Activated naive CD4-positive, alpha-beta T cell treated with anti-CD3 and anti-CD28 coated beads, Interleukin-2, amount 10 ng/mL, durations not matched to agents 7 days and 5 days (primary cell): ENCODE measurements at regions of chr19 and their contacts with region 1.

Region 1: DNA sequence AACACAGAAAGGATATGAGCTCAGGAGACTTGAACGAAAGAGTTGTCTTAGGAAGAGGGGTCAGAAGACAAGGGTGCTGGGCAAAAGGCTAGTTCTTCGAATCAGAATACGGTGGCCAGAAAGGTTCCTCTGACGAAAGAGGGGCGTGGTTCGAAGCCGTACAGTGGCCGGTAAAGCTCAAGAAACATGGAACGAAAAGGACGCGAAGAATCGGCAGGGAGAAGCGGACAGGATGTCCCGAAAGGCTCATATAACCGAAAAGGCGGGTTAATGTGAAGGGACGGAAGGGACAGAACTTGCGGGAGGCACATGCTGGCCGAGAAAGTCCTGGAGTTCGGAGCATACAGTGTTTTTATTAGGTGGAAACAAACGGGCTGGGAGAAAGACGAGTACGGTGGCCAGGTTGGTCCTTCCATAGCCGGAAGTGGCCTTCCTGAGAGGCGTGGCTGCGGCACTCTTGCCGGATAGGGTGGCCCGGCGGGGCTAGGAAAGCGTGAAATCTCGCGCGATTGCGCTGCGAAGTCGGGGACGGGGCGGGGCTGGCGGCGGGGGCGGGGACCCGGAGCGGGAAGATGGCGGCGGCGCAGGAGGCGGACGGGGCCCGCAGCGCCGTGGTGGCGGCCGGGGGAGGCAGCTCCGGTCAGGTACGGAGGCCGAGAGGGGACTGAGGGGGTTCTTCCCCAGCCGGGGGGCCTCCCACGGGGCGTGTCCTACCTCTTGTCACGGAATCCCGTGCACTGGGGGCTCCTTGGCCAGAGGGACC is at the start of gene CLPTM1:
- DNase-seq: peak; percentile 97
- H3K4me3 Mint-ChIP-seq: peak within 1 kb of the TSS; percentile 89
- H3K27ac Mint-ChIP-seq: peak within 1 kb of the TSS; percentile 97
- H3K4me1 Mint-ChIP-seq: peaks cover 43% of the 10 kb centered on the region
- H3K27me3 Mint-ChIP-seq: no peaks in the 10 kb centered on the region

Region 2: GRCh38 chr19:44903602-44904425 is 51.2 kb before region 1 on chr19:
- CTCF ChIA-PET with region 1: interaction called, 18 read pairs
- DNase-seq: peak; percentile 77
- H3K4me3 Mint-ChIP-seq: no peak overlapping the region
- H3K27ac Mint-ChIP-seq: no peak overlapping the region
- H3K4me1 Mint-ChIP-seq: peaks cover 11% of the 10 kb centered on the region
- H3K27me3 Mint-ChIP-seq: peaks cover 44% of the 10 kb centered on the region